Activated CD4-positive, alpha-beta T cell treated with anti-CD3 and anti-CD28 coated beads, Interleukin-2, amount 10 ng/mL, durations not matched to agents 7 days and 5 days (primary cell): ENCODE measurements at regions of chr1 and their contacts with region 1.

Region 1: DNA sequence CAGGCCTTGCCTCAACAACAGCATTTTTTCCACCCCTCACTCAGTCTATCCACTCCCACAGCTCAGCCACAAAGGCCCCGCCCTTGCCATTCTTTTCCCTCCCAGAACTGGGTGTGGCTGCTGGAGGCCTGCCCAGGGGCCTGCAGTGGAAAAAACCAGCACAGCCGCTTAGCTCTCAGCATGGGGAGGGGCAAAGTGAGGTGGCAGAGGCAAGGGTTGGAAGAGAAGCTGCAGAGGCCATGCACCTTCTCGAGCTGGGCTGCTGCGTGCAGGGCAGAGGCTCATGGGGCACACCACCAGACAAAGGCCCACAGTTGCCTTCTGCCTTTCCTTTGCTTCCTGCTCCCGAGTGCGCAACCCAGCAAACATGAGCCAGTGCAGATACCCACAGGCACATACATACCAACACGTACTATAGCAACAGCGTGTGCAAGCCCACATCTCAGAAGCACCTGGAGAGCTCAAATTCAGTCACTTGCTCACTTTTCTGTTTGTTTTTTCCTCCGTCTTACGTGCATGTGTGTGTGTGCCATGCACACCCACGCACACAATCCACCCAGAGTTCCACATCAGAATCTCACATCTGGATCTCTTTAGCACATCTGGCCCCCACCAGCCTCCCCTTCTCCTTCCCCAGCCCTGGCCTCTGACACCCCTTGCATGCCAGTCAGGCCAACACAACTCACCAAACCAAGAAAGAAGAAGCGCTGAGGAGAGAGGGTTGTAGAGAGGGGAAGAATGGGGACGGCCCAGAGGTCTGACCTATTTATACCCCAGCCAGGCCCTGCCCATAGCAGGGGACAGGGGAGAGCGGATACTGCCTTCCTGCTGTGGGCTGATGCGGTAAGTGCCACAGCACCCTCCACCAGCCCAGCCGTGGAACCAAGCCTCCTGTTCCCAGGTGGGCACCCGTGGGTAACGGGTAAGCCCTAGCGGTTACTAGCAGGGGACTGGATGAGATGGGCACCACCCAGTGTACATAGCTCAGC is at the start of gene S100A4:
- DNase-seq: peak; percentile 97
- H3K4me3 Mint-ChIP-seq: peak within 1 kb of the TSS; percentile 91
- H3K27ac Mint-ChIP-seq: peak within 1 kb of the TSS; percentile 98
- H3K4me1 Mint-ChIP-seq: peaks cover 85% of the 10 kb centered on the region
- H3K27me3 Mint-ChIP-seq: no peaks in the 10 kb centered on the region
- total RNA-seq, gene S100A4: 678 to 905 TPM

Region 2: DNA sequence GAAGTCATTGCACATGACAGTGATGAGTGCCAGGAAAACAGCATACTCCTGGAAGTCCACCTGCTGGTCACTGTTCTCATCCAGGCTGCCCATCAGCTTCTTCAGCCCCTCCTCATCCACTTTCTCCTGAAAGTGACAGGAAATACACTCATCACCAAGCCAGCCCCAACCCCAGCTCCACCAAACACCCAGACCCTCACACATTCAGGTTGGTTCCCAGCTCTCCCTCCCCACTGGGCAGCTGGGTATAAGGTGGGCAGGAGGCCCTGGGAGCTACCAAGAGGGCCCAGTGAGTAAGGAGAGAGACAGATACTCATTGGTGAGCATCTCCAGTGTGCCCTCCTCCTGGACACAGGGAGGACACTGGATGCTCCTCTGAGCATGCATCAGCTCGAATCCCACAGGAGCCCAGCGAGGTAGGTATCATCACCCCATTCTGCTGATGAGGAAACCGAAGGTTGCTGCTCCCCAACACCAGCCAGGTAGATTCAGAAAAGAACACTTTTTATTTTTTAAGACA is 16.2 kb after region 1 on chr1:
- CTCF ChIA-PET with region 1: interaction called, 24 read pairs
- POLR2A ChIA-PET with region 1: interaction called, 7 read pairs
- DNase-seq: no peak
- H3K4me3 Mint-ChIP-seq: no peak overlapping the region
- H3K27ac Mint-ChIP-seq: peak overlapping the region; percentile 19
- H3K4me1 Mint-ChIP-seq: peaks cover 15% of the 10 kb centered on the region
- H3K27me3 Mint-ChIP-seq: no peaks in the 10 kb centered on the region